ENCODE measurements at regions of chr21 and their contacts with region 1.

Region 1: DNA sequence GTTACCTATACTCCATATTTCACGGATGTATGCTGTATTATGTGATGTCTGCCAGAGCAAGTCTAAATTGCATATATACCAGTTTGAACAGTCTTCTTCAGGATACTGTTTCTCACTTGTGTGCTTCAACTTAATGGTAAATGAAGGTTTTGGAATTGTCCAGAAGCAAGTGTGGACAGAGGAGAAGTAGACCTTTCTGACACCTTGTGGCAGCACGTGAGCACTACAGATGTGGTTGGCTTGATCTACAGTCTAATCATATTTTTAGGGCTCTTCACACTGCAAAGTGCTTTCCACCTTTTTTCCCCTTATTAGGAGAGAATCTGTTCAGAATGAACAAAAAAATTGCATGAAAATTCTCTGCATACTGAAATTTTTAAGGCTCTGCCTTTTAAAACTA is 10.9 kb downstream of the MORC3 start:
- DNase-seq: peak in 1 of 4 donors; percentile 44
- ATAC-seq: peak; percentile 93
- H3K4me3 ChIP-seq: no peak overlapping the region
- H3K27ac ChIP-seq: no peak overlapping the region
- H3K4me1 ChIP-seq: peaks cover 0 to 67% of the 10 kb centered on the region in 2 donors
- H3K27me3 ChIP-seq: no peaks in the 10 kb centered on the region
- CTCF ChIP-seq: peak; percentile 61 to 64

Region 2: GRCh38 chr21:36141513-36141925 is 189.4 kb before region 1 on chr21:
- intact Hi-C with region 1: loop called in 1 of 2 experiments (anchors 10 kb)
- DNase-seq: peak; percentile 54 to 89 (median 86)
- ATAC-seq: peak; percentile 99
- H3K4me3 ChIP-seq: no peak overlapping the region
- H3K27ac ChIP-seq: no peak overlapping the region
- H3K4me1 ChIP-seq: peaks cover 0 to 8% of the 10 kb centered on the region in 2 donors
- H3K27me3 ChIP-seq: no peaks in the 10 kb centered on the region
- CTCF ChIP-seq: peak; percentile 80 to 86